Astrocyte of the cerebellum (primary cell): ENCODE measurements at regions of chr6 and their contacts with region 1.

Region 1: GRCh38 chr6:168165373-168165772 is 86.4 kb upstream of the FRMD1 start:
- DNase-seq: no peak
- H3K4me3 ChIP-seq: no peak overlapping the region
- CTCF ChIP-seq: no peak

Region 2: GRCh38 chr6:168201383-168201782 is 36.0 kb after region 1 on chr6:
- in situ Hi-C with region 1: loop called (anchors 5 kb)
- DNase-seq: no peak
- H3K4me3 ChIP-seq: no peak overlapping the region
- CTCF ChIP-seq: no peak

Region 3: DNA sequence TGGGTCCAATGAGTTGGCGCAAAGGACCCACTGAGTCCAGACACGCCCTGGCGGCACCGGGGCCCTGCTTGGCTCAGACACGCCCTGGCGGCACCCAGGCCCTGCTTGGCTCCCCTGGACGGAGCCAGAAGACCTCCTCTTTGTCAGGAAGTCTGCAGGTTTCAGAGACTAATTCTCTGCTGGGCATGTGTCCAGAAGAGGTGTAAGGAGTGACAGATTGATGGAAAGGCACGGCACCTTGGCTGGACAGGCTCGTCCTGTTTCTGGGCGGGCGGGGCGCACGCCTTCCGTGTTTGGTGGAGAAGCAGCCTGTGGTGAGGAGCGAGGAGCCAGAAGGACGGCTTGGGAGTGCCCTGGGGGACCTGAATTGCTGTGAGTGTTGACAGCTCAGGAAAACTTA is 177.3 kb after region 1 on chr6:
- in situ Hi-C with region 1: no loop called
- DNase-seq: no peak
- H3K4me3 ChIP-seq: no peak overlapping the region
- CTCF ChIP-seq: no peak